IMR-90 (cell line): ENCODE measurements at regions of chr6 and their contacts with region 1.

Region 1: DNA sequence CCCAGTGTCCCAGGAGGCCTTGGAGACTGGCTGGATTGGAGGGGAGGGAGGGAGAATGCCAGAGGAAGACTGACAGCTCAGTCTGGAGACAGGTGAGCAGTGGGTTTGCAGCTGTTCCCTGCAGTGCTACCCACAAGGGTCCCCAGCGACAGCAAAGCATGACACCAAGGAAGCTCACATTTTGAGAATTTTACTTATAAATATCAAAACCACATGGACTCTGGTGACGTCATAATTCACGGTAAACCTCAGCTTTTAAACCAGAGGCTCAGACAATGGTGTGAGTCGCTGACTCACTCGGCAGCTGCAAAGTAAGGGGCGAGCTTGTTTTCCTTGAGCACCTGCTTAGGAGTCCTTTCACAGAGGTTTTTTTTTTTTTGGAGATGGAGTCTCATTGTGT is 65.2 kb downstream of the THBS2 start:
- DNase-seq: peak; percentile 100
- ATAC-seq: peak; percentile 38
- H3K4me3 ChIP-seq: no peak overlapping the region
- H3K27ac ChIP-seq: 0 out of 2 replicates have a peak overlapping the region, but pooled peaks have one; percentile 0
- H3K4me1 ChIP-seq: peaks cover 21% of the 10 kb centered on the region
- H3K27me3 ChIP-seq: no peaks in the 10 kb centered on the region
- CTCF ChIP-seq: no peak
- POLR2A ChIP-seq: no peak
- RAD21 ChIP-seq: no peak

Region 2: DNA sequence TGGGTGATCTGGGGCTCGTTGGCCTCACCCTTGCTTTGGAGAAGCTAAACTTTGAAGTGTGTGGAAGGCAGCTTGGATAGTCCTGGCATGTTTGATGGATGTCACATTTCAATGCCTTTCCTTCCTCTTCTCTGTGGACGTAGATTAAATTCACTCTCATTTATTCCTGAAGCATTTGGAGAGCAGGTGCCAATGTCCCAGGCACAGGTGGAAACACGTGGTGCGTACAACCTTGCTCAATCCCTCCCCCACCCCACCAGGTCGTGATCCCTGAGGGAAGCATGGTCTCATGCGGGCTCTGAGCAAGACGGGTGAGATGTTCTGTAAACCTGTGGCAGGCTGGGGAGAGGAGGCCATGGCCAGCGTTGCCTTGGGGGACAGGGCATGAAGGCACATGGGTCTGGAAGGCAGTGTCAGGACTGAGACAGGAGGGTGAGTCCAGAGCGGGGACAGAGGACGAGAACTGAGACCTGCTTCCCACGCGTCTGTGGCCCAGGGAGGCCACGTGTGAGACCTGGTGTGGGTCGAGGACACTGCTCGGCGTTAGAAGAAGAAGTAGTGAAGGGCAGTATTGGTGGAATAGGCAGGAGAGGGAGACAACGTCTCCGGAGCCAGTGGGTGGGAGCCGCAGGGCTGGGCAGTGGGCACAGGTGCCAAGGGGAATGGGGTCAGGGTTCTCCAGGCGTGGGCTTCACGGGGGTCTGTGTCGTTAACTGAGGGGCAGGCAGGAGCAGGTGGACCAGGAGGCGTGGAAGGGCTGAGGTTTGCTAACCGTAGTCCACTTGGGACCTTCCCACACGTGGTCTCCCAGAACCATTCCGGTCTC is 713.1 kb before region 1 on chr6:
- CTCF ChIA-PET with region 1: no interaction called
- POLR2A ChIA-PET with region 1: no interaction called
- dilution Hi-C with region 1: no loop called
- in situ Hi-C with region 1: no loop called
- intact Hi-C with region 1: loop called (anchors 10 kb)
- DNase-seq: no peak
- ATAC-seq: no peak
- H3K4me3 ChIP-seq: no peak overlapping the region
- H3K27ac ChIP-seq: no peak overlapping the region
- H3K4me1 ChIP-seq: no peaks in the 10 kb centered on the region
- H3K27me3 ChIP-seq: no peaks in the 10 kb centered on the region
- CTCF ChIP-seq: no peak
- POLR2A ChIP-seq: no peak
- RAD21 ChIP-seq: no peak

Region 3: DNA sequence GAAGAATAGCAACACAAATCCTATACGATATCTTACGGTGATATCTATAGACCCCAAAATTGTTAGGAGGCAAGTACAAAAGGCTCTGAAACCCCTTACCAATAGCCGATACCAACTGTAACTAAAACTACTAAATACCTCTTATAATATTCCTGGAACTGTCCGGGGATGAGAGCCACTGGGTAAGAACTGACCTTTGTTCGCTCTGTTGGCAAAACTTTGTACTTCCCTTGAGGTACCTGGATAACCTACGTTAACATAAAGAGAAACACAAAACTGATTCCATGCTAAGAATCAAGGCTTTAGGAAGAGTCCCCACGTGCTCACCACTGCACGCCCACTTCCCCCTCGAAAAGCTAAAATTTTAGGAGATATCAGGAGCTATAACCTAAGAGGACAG is 526.1 kb after region 1 on chr6:
- CTCF ChIA-PET with region 1: interaction called, 10 read pairs
- POLR2A ChIA-PET with region 1: no interaction called
- dilution Hi-C with region 1: no loop called
- in situ Hi-C with region 1: no loop called
- intact Hi-C with region 1: no loop called
- DNase-seq: no peak
- ATAC-seq: no peak
- H3K4me3 ChIP-seq: no peak overlapping the region
- H3K27ac ChIP-seq: no peak overlapping the region
- H3K4me1 ChIP-seq: no peaks in the 10 kb centered on the region
- H3K27me3 ChIP-seq: no peaks in the 10 kb centered on the region
- CTCF ChIP-seq: no peak
- POLR2A ChIP-seq: no peak
- RAD21 ChIP-seq: no peak